ENCODE measurements at regions of chr17 and their contacts with region 1.

Region 1: DNA sequence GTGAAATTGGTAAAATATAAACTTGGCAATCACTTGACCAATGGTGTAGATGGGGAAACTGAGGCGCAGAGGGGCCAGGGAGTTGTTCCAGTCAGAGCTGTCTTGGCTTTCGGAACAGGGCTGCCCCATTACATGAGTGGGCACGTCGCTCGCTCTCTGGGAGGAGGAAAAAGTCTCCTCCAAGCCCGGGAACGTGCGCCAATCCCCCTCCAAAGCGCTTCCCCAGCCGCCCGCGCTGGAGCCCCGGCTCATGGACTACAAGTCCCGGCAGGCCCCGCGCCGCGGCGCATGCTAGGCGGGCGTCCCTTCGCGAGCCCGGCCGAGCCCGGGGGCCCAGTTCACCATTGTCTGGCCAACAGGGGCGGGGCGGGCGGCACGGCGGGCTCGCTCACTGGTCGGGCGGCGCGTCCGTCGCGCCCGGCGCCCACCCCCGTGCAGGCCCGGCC is 291 bp upstream of the LLGL1 start:
- DNase-seq: peak; percentile 99
- H3K4me3 ChIP-seq: peak overlapping the region; percentile 21 to 68 (median 56)
- H3K27ac ChIP-seq: peak overlapping the region; percentile 54 to 70 (median 63)
- H3K4me1 ChIP-seq: peaks cover 0 to 26% (median 19%) of the 10 kb centered on the region in 4 donors
- H3K27me3 ChIP-seq: no peaks in the 10 kb centered on the region
- CTCF ChIP-seq: no peak
- EP300 ChIP-seq: no peak
- POLR2A ChIP-seq: no peak

Region 2: GRCh38 chr17:18314731-18315561 is 89.8 kb after region 1 on chr17 and contains the starts of genes SMCR8 and TOP3A:
- intact Hi-C with region 1: loop called (anchors 5 kb)
- DNase-seq: peak; percentile 99
- H3K4me3 ChIP-seq: peak within 1 kb of the TSS; percentile 81 to 93 (median 90)
- H3K27ac ChIP-seq: peak within 1 kb of the TSS; percentile 85 to 92 (median 90)
- H3K4me1 ChIP-seq: peaks cover 0 to 71% (median 63%) of the 10 kb centered on the region in 4 donors
- H3K27me3 ChIP-seq: no peaks in the 10 kb centered on the region
- CTCF ChIP-seq: no peak
- EP300 ChIP-seq: peak in 1 of 4 donors; percentile 37
- POLR2A ChIP-seq: peak in 1 of 2 donors; percentile 26
- total RNA-seq, gene SMCR8: 9.3 to 12.2 (median 10.6) TPM
- total RNA-seq, gene TOP3A: 22.1 to 42.4 (median 26.0) TPM

Measured in sigmoid colon (tissue), 7 donors.